Left cardiac atrium (tissue), 4 donors: ENCODE measurements at regions of chr17 and their contacts with region 1.

Region 1: GRCh38 chr17:40443583-40444327 is 505 bp downstream of the IGFBP4 start:
- DNase-seq: peak; percentile 89
- ATAC-seq: peak; percentile 40 to 66

Region 2: DNA sequence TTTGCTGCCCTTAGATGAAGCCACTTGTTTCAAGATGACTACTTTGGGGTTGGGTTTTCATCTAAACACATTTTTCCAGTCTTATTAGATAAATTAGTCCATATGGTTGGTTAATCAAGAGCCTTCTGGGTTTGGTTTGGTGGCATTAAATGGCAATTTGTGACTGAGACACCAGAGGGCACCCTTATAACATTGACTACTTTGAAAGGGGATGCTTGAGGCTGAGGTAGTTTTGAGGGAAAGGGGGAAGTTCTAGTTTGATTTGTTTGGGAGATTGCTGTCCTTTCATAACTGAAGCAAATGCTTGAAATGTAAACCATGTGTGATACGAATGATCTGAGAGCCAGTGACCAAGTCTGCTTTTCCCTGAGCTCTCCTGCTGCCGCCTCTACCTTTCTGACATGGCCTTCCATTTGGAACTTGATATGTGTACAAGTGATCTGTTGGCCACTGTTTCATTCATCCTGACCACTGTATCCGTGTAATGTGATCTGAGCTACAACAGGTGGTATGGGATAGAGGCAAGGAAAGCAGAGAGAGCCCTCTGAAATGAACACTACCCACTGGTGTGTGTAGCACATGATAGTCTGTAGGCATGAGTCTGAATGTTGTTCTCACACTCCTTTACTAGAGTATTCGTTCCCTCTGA is 140.6 kb before region 1 on chr17:
- intact Hi-C with region 1: no loop called
- DNase-seq: no peak
- ATAC-seq: peak; percentile 50 to 53

Region 3: DNA sequence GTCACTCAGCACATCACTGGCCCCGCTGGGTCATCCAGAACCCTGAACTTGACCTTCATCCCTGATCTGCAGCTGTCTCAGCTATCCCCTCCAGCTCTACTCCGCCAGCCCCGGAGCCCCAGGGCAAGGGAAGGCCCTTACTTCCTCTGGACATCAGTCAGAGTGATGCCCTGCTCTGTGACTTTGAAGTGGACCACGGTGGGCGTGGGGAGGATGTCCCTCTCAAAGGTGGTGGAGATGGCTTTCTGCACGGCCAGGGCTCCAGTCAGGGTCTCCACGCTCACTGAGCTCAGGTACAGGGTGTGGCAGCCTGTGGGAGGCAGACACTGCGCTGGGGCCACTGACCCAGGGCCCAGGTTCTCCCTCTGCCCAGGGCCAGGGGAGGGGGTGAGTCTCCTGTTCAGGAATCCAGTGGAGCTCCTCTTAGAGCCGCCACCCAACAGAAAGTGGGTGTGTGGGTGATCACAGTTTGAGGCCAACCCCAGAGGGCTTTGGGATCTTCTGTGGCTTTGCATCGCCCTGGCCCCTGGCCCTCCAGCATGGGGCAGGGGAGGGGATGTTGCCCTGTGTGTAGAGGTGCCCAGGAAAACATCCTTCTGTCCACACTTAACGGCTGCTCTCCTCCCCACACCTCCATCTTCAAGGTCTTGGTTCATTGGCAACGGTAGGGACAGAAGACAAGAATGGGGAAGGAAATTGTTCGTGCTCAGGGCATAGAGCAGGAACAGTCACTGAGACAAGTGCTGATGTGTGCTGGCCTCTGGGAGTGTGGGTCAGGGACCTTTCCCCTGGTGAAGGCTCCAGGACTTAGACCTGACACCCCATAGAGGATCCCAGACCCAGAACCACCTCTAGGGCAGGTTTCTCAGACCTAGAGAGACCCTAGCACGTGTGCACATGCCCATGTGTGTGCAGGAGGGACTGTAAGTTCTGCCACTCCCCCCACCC is 36.1 kb after region 1 on chr17:
- intact Hi-C with region 1: loop called in 1 of 2 experiments (anchors 5 kb)
- DNase-seq: no peak
- ATAC-seq: no peak

Region 4: DNA sequence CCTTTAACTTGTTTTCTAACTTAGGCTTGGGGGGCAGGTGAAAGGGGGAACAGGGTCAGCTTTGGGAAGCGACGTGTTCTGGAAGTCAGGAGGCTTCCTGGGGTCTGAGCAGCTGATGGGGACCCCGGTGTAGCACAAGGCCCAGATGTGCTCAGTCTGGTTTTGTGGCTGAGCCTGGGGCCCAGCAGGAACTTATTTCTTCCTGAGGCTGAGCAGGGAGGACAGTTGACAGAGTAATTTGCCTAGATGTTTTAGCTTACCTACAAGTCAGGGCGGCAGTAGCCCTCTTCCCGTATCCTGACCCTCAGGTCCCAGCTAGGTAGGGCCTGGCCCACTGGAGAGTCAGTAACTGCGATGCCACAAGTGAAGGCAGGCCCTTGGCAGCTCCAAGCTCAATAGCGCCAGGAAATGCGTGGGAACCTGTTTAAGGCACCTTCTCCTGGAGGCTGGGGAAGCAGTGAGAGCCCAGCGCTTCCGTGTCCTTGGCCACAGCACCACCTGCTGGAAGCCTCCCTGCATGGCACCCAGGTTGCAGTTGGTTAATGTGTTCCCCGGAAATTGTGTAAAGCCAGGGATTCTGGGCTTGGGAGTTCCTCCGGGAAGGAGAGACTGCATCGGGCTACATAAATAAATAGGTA is 116.3 kb after region 1 on chr17:
- intact Hi-C with region 1: loop called in 1 of 2 experiments (anchors 5 kb)
- DNase-seq: peak; percentile 89
- ATAC-seq: peak; percentile 81 to 84